Lower leg skin (tissue), 4 donors: ENCODE measurements at regions of chr3 and their contacts with region 1.

Region 1: DNA sequence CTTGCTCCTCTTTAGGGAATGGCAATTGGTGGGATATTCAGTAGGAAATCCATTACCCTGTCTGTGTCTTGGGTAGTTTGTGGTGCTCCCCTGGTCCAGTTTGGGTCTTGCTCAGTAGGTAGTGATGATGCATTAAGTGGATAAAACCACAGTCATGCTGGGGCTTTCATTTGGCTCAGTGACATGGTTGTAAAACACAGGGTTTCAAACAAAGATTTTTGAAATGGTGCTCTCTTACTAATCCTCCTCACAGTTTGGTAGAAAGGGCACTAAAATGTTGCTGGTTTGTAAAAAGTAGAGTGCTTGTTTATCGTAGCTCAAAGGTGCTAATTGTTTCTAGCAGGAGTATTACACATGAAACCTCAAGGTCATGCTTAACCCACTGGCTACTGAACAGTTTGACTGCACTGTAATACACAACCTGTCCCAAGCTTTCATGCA is 22.9 kb downstream of the BBX start:
- DNase-seq: no peak
- H3K4me3 ChIP-seq: no peak overlapping the region
- CTCF ChIP-seq: no peak
- POLR2A ChIP-seq: no peak

Region 2: GRCh38 chr3:107531917-107532469 is 13.7 kb before region 1 on chr3:
- intact Hi-C with region 1: loop called (anchors 2 kb)
- DNase-seq: no peak
- H3K4me3 ChIP-seq: no peak overlapping the region
- CTCF ChIP-seq: no peak
- POLR2A ChIP-seq: no peak

Region 3: GRCh38 chr3:107690522-107691138 is 144.9 kb after region 1 on chr3:
- intact Hi-C with region 1: no loop called
- DNase-seq: no peak
- H3K4me3 ChIP-seq: no peak overlapping the region
- CTCF ChIP-seq: no peak
- POLR2A ChIP-seq: no peak